ENCODE measurements at regions of chr19 and their contacts with region 1.

Region 1: GRCh38 chr19:6767357-6768235 is at the start of gene SH2D3A:
- DNase-seq: peak; percentile 47 to 74
- ATAC-seq: peak; percentile 39 to 60 (median 51)
- H3K4me3 ChIP-seq: peak within 1 kb of the TSS; percentile 41
- H3K27ac ChIP-seq: no peak within 1 kb of the TSS
- H3K4me1 ChIP-seq: peaks cover 5% of the 10 kb centered on the region
- H3K27me3 ChIP-seq: peaks cover 0 to 28% (median 11%) of the 10 kb centered on the region in 3 donors
- CTCF ChIP-seq: no peak
- total RNA-seq, gene SH2D3A: 0.13 TPM in 1 of 4 donors, not detected in the others

Region 2: DNA sequence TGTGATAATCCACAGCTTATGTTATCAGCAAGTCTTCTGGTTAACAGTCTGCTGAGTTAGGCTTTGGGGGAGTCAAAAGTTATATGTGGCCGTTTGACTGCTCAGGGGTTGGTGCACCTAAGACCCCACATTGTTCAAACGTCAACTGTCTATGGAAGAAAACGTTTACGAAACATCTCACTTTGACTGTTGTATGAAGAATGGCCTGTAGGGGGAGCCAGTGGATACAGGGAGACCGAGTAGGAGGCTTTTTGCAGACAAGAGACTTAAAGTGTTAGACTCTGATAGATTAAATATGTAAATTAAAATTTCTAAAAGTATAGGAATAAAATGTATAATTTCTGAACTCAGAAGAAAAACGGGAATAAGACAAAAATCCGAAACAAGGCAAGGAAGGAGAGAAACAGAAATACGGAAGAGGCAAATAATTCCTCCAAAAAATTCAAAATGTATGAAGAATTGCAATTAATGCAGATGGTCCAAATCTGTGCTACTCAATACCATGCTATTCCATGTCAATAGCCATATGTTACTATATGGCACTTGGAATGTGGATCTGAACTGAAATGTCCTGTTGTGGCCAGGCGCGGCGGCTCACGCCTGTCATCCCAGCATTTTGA is 135.5 kb before region 1 on chr19:
- intact Hi-C with region 1: loop called in 1 of 2 experiments (anchors 2 kb)
- DNase-seq: no peak
- ATAC-seq: peak in 1 of 4 donors; percentile 69
- H3K4me3 ChIP-seq: no peak overlapping the region
- H3K27ac ChIP-seq: no peak overlapping the region
- H3K4me1 ChIP-seq: no peaks in the 10 kb centered on the region
- H3K27me3 ChIP-seq: peaks cover 0 to 11% (median 0%) of the 10 kb centered on the region in 3 donors
- CTCF ChIP-seq: peak; percentile 83

Region 3: GRCh38 chr19:6730153-6730825 is 37.3 kb before region 1 on chr19:
- intact Hi-C with region 1: loop called in 1 of 2 experiments (anchors 5 kb)
- DNase-seq: peak in 1 of 2 donors; percentile 70
- ATAC-seq: peak; percentile 14 to 68 (median 46)
- H3K4me3 ChIP-seq: no peak overlapping the region
- H3K27ac ChIP-seq: no peak overlapping the region
- H3K4me1 ChIP-seq: no peaks in the 10 kb centered on the region
- H3K27me3 ChIP-seq: no peaks in the 10 kb centered on the region
- CTCF ChIP-seq: no peak

Measured in psoas muscle (tissue), 8 donors.